ENCODE measurements at regions of chr1 and their contacts with region 1.

Region 1: GRCh38 chr1:111755331-111756123 is at the start of gene DDX20:
- DNase-seq: peak; percentile 96
- ATAC-seq: peak; percentile 93
- H3K4me3 Mint-ChIP-seq: peak within 1 kb of the TSS; percentile 88
- H3K27ac Mint-ChIP-seq: peak within 1 kb of the TSS; percentile 98
- H3K4me1 Mint-ChIP-seq: peaks cover 33% of the 10 kb centered on the region
- H3K27me3 Mint-ChIP-seq: no peaks in the 10 kb centered on the region
- CTCF ChIP-seq: peak; percentile 84
- total RNA-seq, gene DDX20: 15.3 to 15.9 TPM

Region 2: GRCh38 chr1:111448918-111449702 is 306.4 kb before region 1 on chr1 and contains the starts of genes ATP5PB and WDR77:
- CTCF ChIA-PET with region 1: interaction called, 9 read pairs
- POLR2A ChIA-PET with region 1: interaction called, 11 read pairs
- intact Hi-C with region 1: no loop called
- DNase-seq: peak; percentile 95
- ATAC-seq: peak; percentile 96
- H3K4me3 Mint-ChIP-seq: peak within 1 kb of the TSS; percentile 100
- H3K27ac Mint-ChIP-seq: peak within 1 kb of the TSS; percentile 100
- H3K4me1 Mint-ChIP-seq: peaks cover 73% of the 10 kb centered on the region
- H3K27me3 Mint-ChIP-seq: no peaks in the 10 kb centered on the region
- CTCF ChIP-seq: no peak
- total RNA-seq, gene ATP5PB: 341 to 342 TPM
- total RNA-seq, gene WDR77: 54.0 to 54.6 TPM

Region 3: DNA sequence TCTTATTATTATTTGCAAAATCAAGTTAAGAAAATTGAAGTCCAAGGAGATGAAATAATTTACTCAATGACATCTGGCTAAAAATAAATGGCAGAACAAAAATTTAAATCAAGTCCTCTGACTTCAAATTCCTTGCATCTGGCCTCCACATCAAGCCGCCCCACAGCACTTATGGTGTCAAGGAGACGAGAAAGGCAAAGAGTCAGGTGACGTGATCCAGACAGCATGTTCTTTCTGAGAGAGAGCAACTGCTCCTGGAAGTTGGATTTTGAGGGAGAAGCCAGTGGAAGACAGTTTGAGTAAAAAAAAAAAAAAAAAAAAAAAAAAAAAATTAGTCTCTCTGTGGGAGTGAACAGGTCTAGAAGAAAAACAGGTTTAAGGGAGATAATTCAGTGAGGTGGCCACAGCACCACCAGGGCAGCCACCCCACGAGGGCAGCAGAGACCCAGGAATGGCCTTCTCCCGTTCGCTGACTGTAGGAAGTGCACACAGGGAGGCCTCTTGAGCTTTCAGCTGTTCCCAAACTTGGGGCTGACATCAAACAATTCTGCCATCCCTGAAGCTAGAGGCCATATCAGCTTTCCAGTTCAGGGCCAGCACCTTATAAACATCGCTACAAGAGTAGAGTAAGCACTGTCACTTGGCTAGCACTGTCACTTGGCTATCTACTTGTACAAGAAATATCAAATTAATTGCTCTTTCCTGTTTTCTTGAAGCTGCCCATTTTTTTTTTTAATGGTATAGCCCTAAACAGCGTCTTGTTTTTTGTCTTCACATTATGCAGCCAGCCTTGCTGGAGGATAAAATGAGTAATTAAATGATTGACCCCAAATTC is 273.9 kb before region 1 on chr1:
- CTCF ChIA-PET with region 1: interaction called, 12 read pairs
- POLR2A ChIA-PET with region 1: interaction called, 4 read pairs
- intact Hi-C with region 1: no loop called
- DNase-seq: peak; percentile 77
- ATAC-seq: peak; percentile 67
- H3K4me3 Mint-ChIP-seq: no peak overlapping the region
- H3K27ac Mint-ChIP-seq: no peak overlapping the region
- H3K4me1 Mint-ChIP-seq: peaks cover 29% of the 10 kb centered on the region
- H3K27me3 Mint-ChIP-seq: no peaks in the 10 kb centered on the region
- CTCF ChIP-seq: peak; percentile 52

Region 4: DNA sequence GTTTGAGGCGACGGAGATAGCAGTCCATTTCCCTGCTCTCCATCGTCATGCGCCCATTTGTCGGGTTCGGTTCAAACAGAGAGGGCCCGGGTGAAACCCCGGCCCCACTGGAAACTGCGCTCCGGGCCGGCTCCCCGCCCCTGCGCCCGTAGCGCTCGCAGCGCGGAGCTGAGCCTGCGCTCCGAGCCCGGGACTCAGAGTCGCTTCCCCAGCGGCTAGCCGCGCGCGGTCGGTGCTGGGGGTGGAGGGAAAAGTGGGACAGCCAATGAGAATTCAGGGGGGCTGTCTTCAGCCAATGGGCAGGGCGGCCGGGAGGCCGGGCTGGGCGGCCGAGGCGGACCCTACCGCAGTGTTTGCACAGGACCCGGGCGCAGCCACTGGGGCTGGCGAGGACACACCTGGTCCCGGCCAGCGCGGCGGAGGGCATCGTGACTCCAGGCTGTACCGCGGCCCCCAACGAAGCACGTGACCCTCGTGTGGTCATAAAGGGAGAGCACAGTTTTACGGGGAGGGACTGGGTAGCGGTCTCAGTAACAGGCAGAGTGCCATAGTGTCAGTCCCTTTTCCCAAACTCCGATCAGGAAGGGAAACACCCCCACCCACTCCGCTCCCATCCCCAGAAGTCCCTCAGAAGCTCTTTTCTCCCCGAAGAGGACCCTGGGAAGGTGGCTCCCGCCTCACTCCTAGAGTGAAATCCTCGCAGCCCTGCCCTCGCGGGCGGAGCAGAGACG is 16.2 kb before region 1 on chr1 and contains the start of gene INKA2:
- CTCF ChIA-PET with region 1: interaction called, 17 read pairs
- POLR2A ChIA-PET with region 1: interaction called, 11 read pairs
- intact Hi-C with region 1: no loop called
- DNase-seq: peak; percentile 84
- ATAC-seq: peak; percentile 82
- H3K4me3 Mint-ChIP-seq: peak within 1 kb of the TSS; percentile 82
- H3K27ac Mint-ChIP-seq: peak within 1 kb of the TSS; percentile 75
- H3K4me1 Mint-ChIP-seq: peaks cover 13% of the 10 kb centered on the region
- H3K27me3 Mint-ChIP-seq: peaks cover 33% of the 10 kb centered on the region
- CTCF ChIP-seq: no peak
- total RNA-seq, gene INKA2: 1.7 to 2.3 TPM

Region 5: DNA sequence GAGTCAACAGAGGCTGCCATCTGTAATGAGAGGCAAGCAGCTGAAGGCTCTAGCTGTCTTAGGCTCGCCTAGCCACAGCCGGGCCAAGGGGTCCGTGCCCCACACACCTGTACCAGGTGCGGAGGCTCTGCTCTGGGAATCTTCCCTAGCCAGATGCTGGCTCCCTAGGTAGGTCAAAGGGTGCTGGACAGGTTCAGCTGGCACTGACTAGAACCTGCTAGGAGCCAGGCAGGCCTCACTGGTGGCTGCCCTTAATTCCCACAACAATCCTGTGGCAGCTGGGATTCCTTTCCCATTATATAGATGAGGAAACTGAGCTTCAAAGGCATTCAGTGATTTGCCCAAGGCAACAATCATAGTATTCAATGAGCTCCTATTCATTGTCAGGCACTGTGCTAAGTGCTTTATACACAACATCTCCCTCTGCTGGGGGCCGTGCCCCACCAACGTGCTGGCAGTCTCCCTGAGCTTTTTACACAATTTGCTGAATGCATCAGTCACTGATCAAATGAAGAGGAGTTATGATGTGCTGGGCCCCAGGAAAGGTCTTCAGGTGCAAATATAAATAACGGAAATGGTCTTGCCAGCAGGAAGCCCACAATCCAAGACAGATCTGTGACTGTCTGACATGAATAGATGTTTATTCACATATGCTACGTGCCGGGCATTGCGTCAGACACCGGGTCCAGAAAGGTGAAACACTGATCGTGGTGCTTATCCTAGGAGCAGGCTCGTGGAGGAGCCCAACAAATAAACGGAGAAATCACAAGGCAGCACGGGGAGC is 58.2 kb after region 1 on chr1:
- CTCF ChIA-PET with region 1: no interaction called
- POLR2A ChIA-PET with region 1: no interaction called
- intact Hi-C with region 1: no loop called
- DNase-seq: peak; percentile 15
- ATAC-seq: no peak
- H3K4me3 Mint-ChIP-seq: no peak overlapping the region
- H3K27ac Mint-ChIP-seq: no peak overlapping the region
- H3K4me1 Mint-ChIP-seq: no peaks in the 10 kb centered on the region
- H3K27me3 Mint-ChIP-seq: peaks cover 1% of the 10 kb centered on the region
- CTCF ChIP-seq: no peak

Measured in activated CD8-positive, alpha-beta T cell treated with anti-CD3 and anti-CD28 coated beads for 36 hours (primary cell).